ENCODE measurements at regions of chr2 and their contacts with region 1.

Region 1: DNA sequence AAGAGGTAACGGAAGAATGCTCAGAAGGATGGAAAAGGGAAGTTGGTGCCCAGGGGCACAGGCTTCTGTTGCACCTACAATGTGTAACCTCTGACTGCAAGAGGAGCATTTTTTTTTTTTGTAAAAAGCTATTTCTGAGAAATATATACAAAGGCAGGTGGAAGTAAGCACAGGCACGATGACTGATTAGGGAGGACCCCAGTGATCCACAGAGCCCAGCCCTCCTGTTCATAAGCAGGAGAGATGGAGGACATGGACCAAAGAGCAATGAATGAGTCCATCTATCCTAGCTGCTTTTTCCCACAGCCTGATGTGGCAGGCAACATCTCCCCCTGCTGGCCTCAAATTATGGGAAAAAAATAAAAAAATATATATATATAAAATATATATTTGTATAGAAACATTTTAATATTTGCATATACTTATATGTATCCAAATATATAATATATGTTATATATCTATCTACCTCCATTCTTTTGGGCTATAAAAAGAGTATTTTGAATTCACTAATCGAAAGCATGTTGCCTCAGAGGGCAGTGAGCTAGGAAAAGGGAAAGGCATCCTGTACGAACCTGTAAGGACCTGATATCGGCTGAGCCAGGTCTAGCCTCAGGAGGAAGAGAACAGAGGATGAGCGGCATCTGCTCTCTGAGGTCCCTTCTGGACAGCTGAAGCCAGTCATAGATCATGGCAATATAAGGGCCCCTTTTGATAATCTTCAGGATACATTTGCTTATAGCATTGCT is 166.0 kb upstream of the STK17B start:
- DNase-seq: no peak
- H3K4me3 ChIP-seq: no peak overlapping the region
- H3K27ac ChIP-seq: no peak overlapping the region
- H3K4me1 ChIP-seq: no peaks in the 10 kb centered on the region
- H3K27me3 ChIP-seq: no peaks in the 10 kb centered on the region
- CTCF ChIP-seq: peak in 2 of 3 experiments; percentile 29 to 46; a peak in 2 of 4 replicates
- EP300 ChIP-seq: no peak
- POLR2A ChIP-seq: no peak
- RAD21 ChIP-seq: peak; percentile 64 to 65

Region 2: DNA sequence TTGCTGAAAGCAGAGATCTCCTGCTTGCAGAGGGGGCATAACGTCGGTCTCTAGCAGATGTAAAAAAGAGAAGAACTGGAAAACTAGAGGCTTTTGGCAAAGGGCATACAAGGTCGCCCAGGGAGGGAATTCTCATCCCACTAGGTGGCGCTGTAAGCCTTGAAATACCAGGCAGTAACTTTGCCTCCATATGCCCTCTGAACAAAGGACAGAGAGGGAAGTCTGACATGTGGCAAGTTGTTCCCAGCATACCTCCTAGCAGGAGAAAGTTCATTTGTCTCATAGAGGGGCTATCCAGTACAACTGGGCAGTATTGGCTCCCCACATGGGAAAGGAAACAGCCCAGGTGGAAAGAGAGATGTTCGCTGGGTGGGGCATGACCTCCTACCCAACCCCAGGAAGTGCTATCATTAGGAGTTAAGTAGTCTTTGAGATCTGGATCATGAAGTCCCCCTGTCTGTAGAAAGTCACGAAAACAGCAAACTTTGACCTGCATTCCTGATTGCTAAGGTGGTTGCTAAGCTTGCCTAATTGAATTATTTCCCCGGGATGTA is 205.9 kb before region 1 on chr2:
- CTCF ChIA-PET with region 1: interaction called, 17 read pairs
- POLR2A ChIA-PET with region 1: interaction called, 3 read pairs
- DNase-seq: peak in 1 of 2 experiments; percentile 82
- H3K4me3 ChIP-seq: no peak overlapping the region
- H3K27ac ChIP-seq: no peak overlapping the region
- H3K4me1 ChIP-seq: no peaks in the 10 kb centered on the region; a peak in 1 of 7 replicates
- H3K27me3 ChIP-seq: no peaks in the 10 kb centered on the region
- CTCF ChIP-seq: peak; percentile 46 to 70 (median 66)
- EP300 ChIP-seq: no peak
- POLR2A ChIP-seq: no peak
- RAD21 ChIP-seq: peak; percentile 85 to 86

Region 3: GRCh38 chr2:196213252-196213980 is 124.0 kb before region 1 on chr2:
- CTCF ChIA-PET with region 1: no interaction called
- POLR2A ChIA-PET with region 1: no interaction called
- DNase-seq: no peak
- H3K4me3 ChIP-seq: no peak overlapping the region
- H3K27ac ChIP-seq: no peak overlapping the region
- H3K4me1 ChIP-seq: peaks cover 0 to 3% (median 0%) of the 10 kb centered on the region in 4 experiments; a peak in 1 of 7 replicates
- H3K27me3 ChIP-seq: no peaks in the 10 kb centered on the region
- CTCF ChIP-seq: no peak
- EP300 ChIP-seq: no peak
- POLR2A ChIP-seq: no peak
- RAD21 ChIP-seq: no peak

Region 4: GRCh38 chr2:196309691-196310090 is 27.7 kb before region 1 on chr2:
- CTCF ChIA-PET with region 1: interaction called, 16 read pairs
- POLR2A ChIA-PET with region 1: interaction called, 3 read pairs
- DNase-seq: no peak
- H3K4me3 ChIP-seq: no peak overlapping the region
- H3K27ac ChIP-seq: no peak overlapping the region
- H3K4me1 ChIP-seq: peaks cover 0 to 2% (median 0%) of the 10 kb centered on the region in 4 experiments; a peak in 1 of 7 replicates
- H3K27me3 ChIP-seq: peaks cover 0 to 1% (median 0%) of the 10 kb centered on the region in 4 experiments; a peak in 1 of 7 replicates
- CTCF ChIP-seq: no peak
- EP300 ChIP-seq: no peak
- POLR2A ChIP-seq: no peak
- RAD21 ChIP-seq: no peak

Region 5: GRCh38 chr2:196316050-196316430 is 21.3 kb before region 1 on chr2:
- CTCF ChIA-PET with region 1: interaction called, 21 read pairs
- POLR2A ChIA-PET with region 1: no interaction called
- DNase-seq: no peak
- H3K4me3 ChIP-seq: no peak overlapping the region
- H3K27ac ChIP-seq: no peak overlapping the region
- H3K4me1 ChIP-seq: no peaks in the 10 kb centered on the region
- H3K27me3 ChIP-seq: no peaks in the 10 kb centered on the region
- CTCF ChIP-seq: no peak
- EP300 ChIP-seq: no peak
- POLR2A ChIP-seq: no peak
- RAD21 ChIP-seq: no peak

Region 6: DNA sequence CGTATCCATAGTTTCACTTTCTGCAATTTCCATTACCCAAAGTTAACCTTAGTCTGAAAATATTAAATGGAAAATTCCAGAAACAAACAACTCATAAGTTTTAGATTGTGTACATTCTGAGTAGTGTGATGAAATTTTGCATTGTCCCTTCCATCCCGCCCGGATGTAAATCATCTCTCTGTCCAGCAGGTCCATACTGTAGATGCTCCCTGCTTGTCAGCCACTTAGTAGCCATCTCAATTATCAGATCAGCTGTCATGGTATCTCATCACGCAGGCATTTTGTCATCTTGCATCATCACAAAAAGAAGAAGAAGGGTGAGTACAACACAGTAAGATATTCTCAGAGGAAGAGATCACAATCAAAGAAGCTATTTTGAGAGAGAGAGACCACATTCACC is 19.0 kb after region 1 on chr2:
- CTCF ChIA-PET with region 1: interaction called, 50 read pairs
- POLR2A ChIA-PET with region 1: no interaction called
- DNase-seq: no peak
- H3K4me3 ChIP-seq: no peak overlapping the region
- H3K27ac ChIP-seq: no peak overlapping the region
- H3K4me1 ChIP-seq: peaks cover 0 to 3% (median 0%) of the 10 kb centered on the region in 4 experiments; a peak in 3 of 7 replicates
- H3K27me3 ChIP-seq: peaks cover 3 to 16% (median 11%) of the 10 kb centered on the region in 4 experiments; a peak in 6 of 7 replicates
- CTCF ChIP-seq: no peak
- EP300 ChIP-seq: no peak
- POLR2A ChIP-seq: no peak
- RAD21 ChIP-seq: no peak

Region 7: GRCh38 chr2:196584903-196585302 is 247.5 kb after region 1 on chr2:
- CTCF ChIA-PET with region 1: no interaction called
- POLR2A ChIA-PET with region 1: no interaction called
- DNase-seq: no peak
- H3K4me3 ChIP-seq: no peak overlapping the region
- H3K27ac ChIP-seq: no peak overlapping the region
- H3K4me1 ChIP-seq: no peaks in the 10 kb centered on the region
- H3K27me3 ChIP-seq: no peaks in the 10 kb centered on the region
- CTCF ChIP-seq: no peak
- EP300 ChIP-seq: no peak
- POLR2A ChIP-seq: no peak
- RAD21 ChIP-seq: no peak